Lower leg skin (tissue), 4 donors: ENCODE measurements at regions of chr9 and their contacts with region 1.

Region 1: DNA sequence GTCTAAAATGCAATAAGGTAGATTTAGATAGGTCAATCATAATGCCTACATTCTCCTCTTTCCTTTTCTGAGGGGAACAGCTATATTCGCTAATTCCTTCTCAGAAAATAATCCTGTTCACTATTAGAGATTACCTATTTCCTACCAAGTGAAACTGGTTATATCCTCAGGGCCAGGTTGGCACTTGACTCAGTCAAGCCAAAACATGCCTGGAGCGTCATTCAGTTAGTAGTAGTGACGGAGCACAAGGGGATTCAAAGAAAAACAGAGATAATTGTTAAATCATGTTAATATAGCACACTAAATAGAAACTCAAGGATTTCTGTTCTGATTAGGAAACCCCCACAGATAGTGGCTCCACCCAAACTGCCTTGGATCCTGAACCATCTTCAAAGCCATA is 515.4 kb upstream of the PTPRD start:
- DNase-seq: no peak
- H3K4me3 ChIP-seq: no peak overlapping the region
- CTCF ChIP-seq: no peak
- POLR2A ChIP-seq: no peak

Region 2: GRCh38 chr9:11149065-11149464 is 20.9 kb after region 1 on chr9:
- intact Hi-C with region 1: loop called (anchors 2 kb)
- DNase-seq: no peak
- H3K4me3 ChIP-seq: no peak overlapping the region
- CTCF ChIP-seq: no peak
- POLR2A ChIP-seq: no peak